A549 (cell line): ENCODE measurements at regions of chr22 and their contacts with region 1.

Region 1: GRCh38 chr22:41589391-41590241 is at the start of gene PMM1:
- DNase-seq: peak; percentile 93 to 99
- ATAC-seq: peak; percentile 95 to 96
- H3K4me3 ChIP-seq: peak within 1 kb of the TSS; percentile 82
- H3K27ac ChIP-seq: peak within 1 kb of the TSS; percentile 78 to 97
- H3K4me1 ChIP-seq: peaks cover 21% of the 10 kb centered on the region
- CTCF ChIP-seq: no peak
- EP300 ChIP-seq: no peak
- POLR2A ChIP-seq: peak; percentile 72
- RAD21 ChIP-seq: no peak
- polyA plus RNA-seq, gene PMM1: 26.2 and 28.7 TPM in 2 replicates

Region 2: DNA sequence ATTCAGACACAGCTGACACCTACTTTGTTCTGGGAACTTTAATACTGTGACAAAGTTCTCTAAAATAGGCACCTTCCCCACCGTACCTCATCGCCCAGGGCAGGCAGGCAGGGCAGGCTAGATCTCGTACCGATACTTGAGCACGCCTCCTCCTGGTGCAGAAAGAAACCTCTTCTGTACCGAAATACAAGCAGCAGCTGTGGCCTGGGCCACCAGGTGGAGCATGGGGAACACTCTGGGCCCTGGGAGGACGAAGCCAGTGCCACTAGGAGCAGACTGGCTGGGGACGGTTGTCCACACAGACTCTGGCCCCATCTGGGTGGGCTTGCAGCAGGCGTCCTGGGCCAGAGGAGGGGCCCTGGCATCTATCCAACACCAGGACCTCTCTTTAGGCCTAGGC is 12.7 kb before region 1 on chr22:
- CTCF ChIA-PET with region 1: interaction called, 12 read pairs
- POLR2A ChIA-PET with region 1: interaction called, 12 read pairs
- DNase-seq: peak; percentile 60 to 72
- ATAC-seq: peak; percentile 89
- H3K4me3 ChIP-seq: no peak overlapping the region
- H3K27ac ChIP-seq: no peak overlapping the region
- H3K4me1 ChIP-seq: no peaks in the 10 kb centered on the region
- CTCF ChIP-seq: peak; percentile 56
- EP300 ChIP-seq: no peak
- POLR2A ChIP-seq: no peak
- RAD21 ChIP-seq: peak; percentile 61 to 74

Region 3: GRCh38 chr22:41603873-41604332 is 14.3 kb after region 1 on chr22:
- CTCF ChIA-PET with region 1: interaction called, 13 read pairs
- POLR2A ChIA-PET with region 1: interaction called, 14 read pairs
- DNase-seq: no peak
- ATAC-seq: no peak
- H3K4me3 ChIP-seq: no peak overlapping the region
- H3K27ac ChIP-seq: no peak overlapping the region
- H3K4me1 ChIP-seq: peaks cover 8% of the 10 kb centered on the region; the same call in 1 of the 3 replicates
- CTCF ChIP-seq: no peak
- EP300 ChIP-seq: no peak
- POLR2A ChIP-seq: no peak
- RAD21 ChIP-seq: no peak